ENCODE measurements at regions of chr6 and their contacts with region 1.

Region 1: GRCh38 chr6:89117211-89118108 is at the start of gene SRSF12:
- DNase-seq: peak; percentile 85
- total RNA-seq, gene SRSF12: 3.4 to 3.5 TPM

Region 2: GRCh38 chr6:88975369-88975768 is 142.1 kb before region 1 on chr6:
- intact Hi-C with region 1: loop called (anchors 10 kb)
- DNase-seq: no peak

Region 3: GRCh38 chr6:88982720-88983119 is 134.7 kb before region 1 on chr6:
- intact Hi-C with region 1: loop called (anchors 10 kb)
- DNase-seq: no peak

Region 4: DNA sequence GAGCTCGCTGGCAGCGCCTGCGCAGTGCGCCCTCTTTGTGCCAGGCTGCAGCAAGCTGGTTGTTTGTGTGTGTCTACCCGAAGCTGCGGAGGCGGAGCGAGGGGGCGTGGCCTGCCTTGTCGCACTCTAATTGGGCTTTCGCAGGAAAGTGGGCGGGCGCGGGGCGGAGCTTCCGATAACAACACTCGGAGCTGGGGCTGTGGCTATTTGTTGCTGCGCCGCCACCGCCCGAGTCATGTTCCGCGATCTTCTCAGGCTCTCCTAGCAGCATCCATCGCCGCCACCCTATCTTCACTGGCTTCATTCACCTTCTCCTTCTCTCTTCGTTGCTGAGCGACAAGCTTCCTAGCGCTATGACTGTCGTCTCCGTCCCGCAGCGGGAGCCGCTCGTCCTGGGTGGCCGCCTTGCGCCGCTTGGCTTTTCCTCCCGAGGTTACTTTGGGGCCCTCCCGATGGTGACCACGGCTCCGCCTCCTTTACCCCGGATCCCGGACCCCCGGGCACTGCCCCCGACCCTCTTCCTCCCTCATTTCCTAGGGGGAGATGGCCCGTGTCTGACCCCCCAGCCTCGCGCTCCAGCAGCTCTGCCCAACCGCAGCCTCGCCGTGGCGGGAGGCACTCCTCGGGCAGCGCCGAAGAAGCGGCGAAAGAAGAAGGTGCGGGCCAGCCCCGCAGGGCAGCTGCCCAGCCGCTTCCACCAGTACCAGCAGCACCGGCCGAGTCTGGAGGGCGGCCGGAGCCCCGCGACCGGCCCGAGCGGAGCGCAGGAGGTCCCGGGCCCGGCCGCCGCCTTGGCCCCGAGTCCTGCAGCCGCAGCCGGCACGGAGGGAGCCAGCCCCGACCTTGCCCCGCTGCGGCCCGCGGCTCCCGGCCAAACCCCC is 36.7 kb before region 1 on chr6 and contains the start of gene PNRC1:
- intact Hi-C with region 1: loop called in 1 of 2 experiments (anchors 2 kb)
- DNase-seq: peak; percentile 100
- total RNA-seq, gene PNRC1: 280 to 381 TPM

Region 5: DNA sequence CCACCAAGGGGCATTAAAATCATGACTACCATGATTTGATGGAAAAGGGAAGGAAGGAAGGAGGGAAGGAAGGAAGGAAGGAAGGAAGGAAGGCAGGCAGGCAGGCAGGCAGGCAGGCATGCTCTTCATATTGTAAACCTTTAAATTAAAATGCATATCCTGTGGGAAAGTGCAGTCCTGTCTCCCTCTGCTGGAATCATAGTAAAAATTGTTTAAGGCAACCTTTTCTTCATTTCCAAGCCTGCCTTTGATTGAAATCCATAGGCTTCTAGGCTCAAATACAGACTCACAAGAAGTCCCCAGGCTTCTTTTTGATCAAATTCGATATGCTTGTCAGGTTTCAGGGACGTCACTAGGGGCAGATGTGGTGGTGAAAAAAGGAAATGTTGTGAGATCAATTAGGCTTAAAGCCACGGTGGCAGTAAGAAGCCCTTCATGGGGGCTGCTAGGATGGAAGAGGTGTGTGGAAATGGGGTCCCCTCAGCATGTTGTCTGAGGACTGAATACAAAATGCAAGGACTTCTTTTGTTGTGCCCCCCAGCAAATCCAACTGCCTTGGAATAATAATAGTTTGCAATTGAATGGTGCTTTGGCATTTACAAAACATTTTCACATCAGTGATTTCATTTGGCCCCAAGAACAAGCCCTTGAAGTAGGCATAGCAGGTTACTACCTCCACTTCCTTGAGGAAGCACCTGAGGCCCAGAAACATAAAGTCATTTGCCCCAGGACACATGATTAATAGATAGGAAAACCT is 125.3 kb after region 1 on chr6:
- intact Hi-C with region 1: loop called (anchors 5 kb)
- DNase-seq: no peak